B cell (primary cell): ENCODE measurements at regions of chr6 and their contacts with region 1.

Region 1: DNA sequence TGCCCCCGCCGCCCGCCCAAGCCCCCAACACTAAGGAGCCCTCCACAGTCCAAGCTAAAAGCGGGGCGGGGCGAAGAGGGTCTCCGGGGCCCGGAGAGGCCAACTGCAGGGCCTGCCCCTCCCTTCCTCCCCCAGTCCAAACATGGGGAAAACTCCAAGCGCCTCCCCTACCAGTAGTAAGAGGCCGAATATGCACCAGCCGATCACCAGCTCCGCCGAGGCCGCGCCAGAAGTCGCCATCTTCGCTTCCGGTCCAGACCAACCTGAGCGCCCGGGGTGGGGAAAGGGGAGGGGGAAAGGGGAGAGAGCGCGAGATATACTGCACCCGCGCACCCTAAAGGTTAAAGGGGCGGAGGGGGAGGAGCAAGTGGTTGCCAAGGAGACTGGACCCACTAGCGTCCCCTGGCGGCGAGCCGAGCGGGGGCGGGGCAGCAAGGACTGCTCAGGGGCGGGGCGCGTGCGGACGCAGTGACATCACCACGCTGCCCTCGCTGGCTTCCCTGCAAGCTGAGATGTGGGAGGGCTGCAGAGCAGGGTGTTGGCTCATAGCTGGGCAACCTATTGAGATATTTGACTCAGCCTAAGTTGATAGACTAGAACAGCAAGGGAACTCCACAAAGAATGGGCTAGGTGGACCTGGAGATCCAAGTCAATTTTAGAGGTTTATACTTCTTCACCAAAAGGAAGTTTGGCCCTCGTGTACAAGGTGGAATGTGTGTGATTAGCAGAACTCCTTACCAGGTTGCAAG is at the start of gene LMBRD1:
- DNase-seq: peak; percentile 99
- ATAC-seq: peak; percentile 84
- H3K4me3 ChIP-seq: peak within 1 kb of the TSS; percentile 81 to 97 (median 85)
- H3K4me3 Mint-ChIP-seq: peak within 1 kb of the TSS; percentile 93
- H3K27ac ChIP-seq: peak within 1 kb of the TSS; percentile 90 to 99
- H3K27ac Mint-ChIP-seq: peak within 1 kb of the TSS; percentile 96
- H3K4me1 ChIP-seq: peaks cover 39 to 40% of the 10 kb centered on the region in 2 donors
- H3K4me1 Mint-ChIP-seq: peaks cover 46% of the 10 kb centered on the region
- H3K27me3 ChIP-seq: no peaks in the 10 kb centered on the region
- H3K27me3 Mint-ChIP-seq: no peaks in the 10 kb centered on the region
- CTCF ChIP-seq: peak; percentile 95
- total RNA-seq, gene LMBRD1: 94.0 and 99.0 TPM in 2 replicates

Region 2: GRCh38 chr6:69813508-69813907 is 16.7 kb after region 1 on chr6:
- CTCF ChIA-PET with region 1: interaction called, 67 read pairs
- POLR2A ChIA-PET with region 1: interaction called, 42 read pairs
- intact Hi-C with region 1: loop called (anchors 1 kb)
- DNase-seq: peak; percentile 55
- ATAC-seq: peak; percentile 68
- H3K4me3 ChIP-seq: peak overlapping the region in 2 of 5 experiments; percentile 9 to 42
- H3K4me3 Mint-ChIP-seq: peak overlapping the region; percentile 64
- H3K27ac ChIP-seq: peak overlapping the region; percentile 85 to 89
- H3K27ac Mint-ChIP-seq: peak overlapping the region; percentile 85
- H3K4me1 ChIP-seq: peaks cover 51 to 62% of the 10 kb centered on the region in 2 donors
- H3K4me1 Mint-ChIP-seq: peaks cover 72% of the 10 kb centered on the region
- H3K27me3 ChIP-seq: no peaks in the 10 kb centered on the region
- H3K27me3 Mint-ChIP-seq: no peaks in the 10 kb centered on the region
- CTCF ChIP-seq: no peak

Region 3: GRCh38 chr6:69881322-69882151 is 84.7 kb after region 1 on chr6:
- CTCF ChIA-PET with region 1: interaction called, 3 read pairs
- POLR2A ChIA-PET with region 1: interaction called, 11 read pairs
- intact Hi-C with region 1: loop called (anchors 1 kb)
- DNase-seq: peak; percentile 88
- ATAC-seq: peak; percentile 87
- H3K4me3 ChIP-seq: peak overlapping the region; percentile 9 to 67 (median 28)
- H3K4me3 Mint-ChIP-seq: peak overlapping the region; percentile 84
- H3K27ac ChIP-seq: peak overlapping the region; percentile 99 to 100
- H3K27ac Mint-ChIP-seq: peak overlapping the region; percentile 95
- H3K4me1 ChIP-seq: peaks cover 56 to 81% of the 10 kb centered on the region in 2 donors
- H3K4me1 Mint-ChIP-seq: peaks cover 69% of the 10 kb centered on the region
- H3K27me3 ChIP-seq: no peaks in the 10 kb centered on the region
- H3K27me3 Mint-ChIP-seq: no peaks in the 10 kb centered on the region
- CTCF ChIP-seq: no peak

Region 4: DNA sequence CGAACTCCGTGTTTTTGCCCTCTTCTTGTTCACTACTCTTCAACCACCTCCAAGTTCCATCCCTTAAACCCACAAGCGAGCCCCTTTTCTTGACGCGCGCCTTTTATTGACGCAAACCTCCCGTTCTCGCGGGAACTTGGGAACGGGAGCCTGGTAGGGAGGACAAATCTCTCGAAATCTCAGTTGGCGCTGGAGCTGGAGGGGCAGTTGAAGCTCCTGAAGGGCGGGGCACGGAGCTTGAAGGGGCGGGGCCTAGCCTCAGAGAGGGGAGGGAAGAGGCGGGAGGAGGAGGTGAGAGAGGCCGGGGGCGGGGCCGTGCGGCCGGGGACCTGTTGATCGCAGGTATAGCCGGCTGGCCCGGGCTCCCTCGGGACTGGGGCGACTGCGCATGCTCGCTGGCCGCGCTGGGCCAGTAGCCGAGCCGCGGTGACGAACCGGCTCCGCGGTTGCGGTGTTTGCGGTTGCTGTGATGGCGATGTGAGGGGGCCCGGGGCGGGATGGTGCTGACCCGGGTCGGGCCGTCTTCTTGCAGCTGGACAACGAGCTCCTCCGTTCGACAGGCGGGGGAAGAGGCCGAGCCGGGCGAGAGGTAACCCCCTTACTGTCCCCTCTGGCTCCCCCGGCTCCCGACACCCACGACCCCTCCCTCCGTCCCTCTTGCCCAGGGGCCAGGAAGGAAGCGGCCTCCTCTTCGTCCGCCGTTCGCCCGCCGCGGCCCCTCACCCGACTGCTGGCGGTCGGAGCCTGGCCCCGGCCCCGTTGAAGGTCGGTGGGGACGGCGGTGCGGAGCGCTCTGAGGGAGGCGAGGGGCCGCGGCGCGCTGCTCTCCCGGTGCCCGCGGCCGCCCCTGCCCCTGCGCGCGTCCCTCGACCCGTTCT is 616.5 kb after region 1 on chr6 and contains the start of gene FAM135A:
- CTCF ChIA-PET with region 1: no interaction called
- POLR2A ChIA-PET with region 1: no interaction called
- intact Hi-C with region 1: loop called (anchors 2 kb)
- DNase-seq: peak; percentile 97
- ATAC-seq: peak; percentile 98
- H3K4me3 ChIP-seq: peak within 1 kb of the TSS; percentile 71 to 88 (median 79)
- H3K4me3 Mint-ChIP-seq: peak within 1 kb of the TSS; percentile 97
- H3K27ac ChIP-seq: peak within 1 kb of the TSS; percentile 67 to 76
- H3K27ac Mint-ChIP-seq: peak within 1 kb of the TSS; percentile 87
- H3K4me1 ChIP-seq: peaks cover 7 to 17% of the 10 kb centered on the region in 2 donors
- H3K4me1 Mint-ChIP-seq: peaks cover 23% of the 10 kb centered on the region
- H3K27me3 ChIP-seq: no peaks in the 10 kb centered on the region
- H3K27me3 Mint-ChIP-seq: no peaks in the 10 kb centered on the region
- CTCF ChIP-seq: no peak
- total RNA-seq, gene FAM135A: 28.9 and 30.6 TPM in 2 replicates

Region 5: GRCh38 chr6:70667711-70668498 is 871.1 kb after region 1 on chr6 and contains the start of gene SMAP1:
- CTCF ChIA-PET with region 1: no interaction called
- POLR2A ChIA-PET with region 1: no interaction called
- intact Hi-C with region 1: loop called (anchors 10 kb)
- DNase-seq: peak; percentile 95
- ATAC-seq: peak; percentile 97
- H3K4me3 ChIP-seq: peak within 1 kb of the TSS; percentile 69 to 92 (median 82)
- H3K4me3 Mint-ChIP-seq: peak within 1 kb of the TSS; percentile 90
- H3K27ac ChIP-seq: peak within 1 kb of the TSS; percentile 60 to 83
- H3K27ac Mint-ChIP-seq: peak within 1 kb of the TSS; percentile 93
- H3K4me1 ChIP-seq: peaks cover 17 to 23% of the 10 kb centered on the region in 2 donors
- H3K4me1 Mint-ChIP-seq: peaks cover 37% of the 10 kb centered on the region
- H3K27me3 ChIP-seq: no peaks in the 10 kb centered on the region
- H3K27me3 Mint-ChIP-seq: peaks cover 6% of the 10 kb centered on the region
- CTCF ChIP-seq: no peak
- total RNA-seq, gene SMAP1: 19.7 and 21.7 TPM in 2 replicates